Activated T-helper 1 cell treated with anti-CD3 and anti-CD28 coated beads, Interleukin-12 subunit alpha, Interleukin-12 subunit beta, Interleukin-2, Interleukin-4 antibody, amounts not matched to agents 30 ng/mL and 10 ng/mL and 1 ng/mL, durations not matched to agents 14 hours and 24 hours and 36 hours (primary cell): ENCODE measurements at regions of chr5 and their contacts with region 1.

Region 1: GRCh38 chr5:86968301-86968753 is 299.4 kb upstream of the RASA1 start:
- DNase-seq: no peak
- H3K4me3 Mint-ChIP-seq: no peak overlapping the region
- H3K27ac Mint-ChIP-seq: no peak overlapping the region
- H3K4me1 Mint-ChIP-seq: no peaks in the 10 kb centered on the region
- H3K27me3 Mint-ChIP-seq: peaks cover 16% of the 10 kb centered on the region

Region 2: GRCh38 chr5:87008751-87009560 is 40.6 kb after region 1 on chr5:
- intact Hi-C with region 1: loop called (anchors 1 kb)
- DNase-seq: no peak
- H3K4me3 Mint-ChIP-seq: no peak overlapping the region
- H3K27ac Mint-ChIP-seq: no peak overlapping the region
- H3K4me1 Mint-ChIP-seq: no peaks in the 10 kb centered on the region
- H3K27me3 Mint-ChIP-seq: peaks cover 20% of the 10 kb centered on the region

Region 3: GRCh38 chr5:87048156-87048555 is 79.8 kb after region 1 on chr5:
- intact Hi-C with region 1: no loop called
- DNase-seq: no peak
- H3K4me3 Mint-ChIP-seq: no peak overlapping the region
- H3K27ac Mint-ChIP-seq: no peak overlapping the region
- H3K4me1 Mint-ChIP-seq: no peaks in the 10 kb centered on the region
- H3K27me3 Mint-ChIP-seq: peaks cover 6% of the 10 kb centered on the region

Region 4: GRCh38 chr5:87182649-87183048 is 214.3 kb after region 1 on chr5:
- intact Hi-C with region 1: no loop called
- DNase-seq: no peak
- H3K4me3 Mint-ChIP-seq: no peak overlapping the region
- H3K27ac Mint-ChIP-seq: no peak overlapping the region
- H3K4me1 Mint-ChIP-seq: peaks cover 16% of the 10 kb centered on the region
- H3K27me3 Mint-ChIP-seq: peaks cover 6% of the 10 kb centered on the region